AG04450 (cell line): ENCODE measurements at regions of chr7 and their contacts with region 1.

Region 1: GRCh38 chr7:23184709-23185359 is 3.0 kb downstream of the NUP42 start:
- DNase-seq: no peak
- H3K4me3 ChIP-seq: no peak overlapping the region
- H3K27ac ChIP-seq: no peak overlapping the region
- H3K27me3 ChIP-seq: no peaks in the 10 kb centered on the region
- CTCF ChIP-seq: peak; percentile 59

Region 2: GRCh38 chr7:23168111-23168885 is 16.5 kb before region 1 on chr7:
- CTCF ChIA-PET with region 1: interaction called, 14 read pairs
- POLR2A ChIA-PET with region 1: no interaction called
- DNase-seq: no peak
- H3K4me3 ChIP-seq: no peak overlapping the region
- H3K27ac ChIP-seq: no peak overlapping the region
- H3K27me3 ChIP-seq: no peaks in the 10 kb centered on the region
- CTCF ChIP-seq: no peak

Region 3: GRCh38 chr7:23196306-23196705 is 11.5 kb after region 1 on chr7:
- CTCF ChIA-PET with region 1: interaction called, 11 read pairs
- POLR2A ChIA-PET with region 1: no interaction called
- DNase-seq: no peak
- H3K4me3 ChIP-seq: no peak overlapping the region
- H3K27ac ChIP-seq: no peak overlapping the region
- H3K27me3 ChIP-seq: no peaks in the 10 kb centered on the region
- CTCF ChIP-seq: no peak

Region 4: DNA sequence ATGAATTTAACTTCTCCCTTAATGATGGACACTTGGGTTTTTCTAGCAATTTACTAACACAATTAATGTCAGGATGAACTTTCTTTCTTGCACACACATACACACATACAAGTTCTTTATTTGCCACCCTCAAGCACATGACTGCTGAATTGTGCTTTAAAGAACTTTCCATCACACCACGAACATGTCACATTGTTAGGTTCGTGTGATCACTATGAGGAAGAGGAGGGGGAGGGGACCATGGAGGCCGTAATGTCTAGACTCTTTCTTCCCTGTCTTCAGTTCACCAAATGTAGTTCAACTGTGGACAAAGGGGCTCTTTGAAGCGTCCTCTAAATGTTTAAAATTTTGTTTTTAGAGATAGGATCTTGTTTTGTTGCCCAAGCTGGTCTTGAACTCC is 28.0 kb after region 1 on chr7:
- CTCF ChIA-PET with region 1: no interaction called
- POLR2A ChIA-PET with region 1: no interaction called
- DNase-seq: no peak
- H3K4me3 ChIP-seq: no peak overlapping the region
- H3K27ac ChIP-seq: no peak overlapping the region
- H3K27me3 ChIP-seq: peaks cover 2% of the 10 kb centered on the region
- CTCF ChIP-seq: no peak

Region 5: DNA sequence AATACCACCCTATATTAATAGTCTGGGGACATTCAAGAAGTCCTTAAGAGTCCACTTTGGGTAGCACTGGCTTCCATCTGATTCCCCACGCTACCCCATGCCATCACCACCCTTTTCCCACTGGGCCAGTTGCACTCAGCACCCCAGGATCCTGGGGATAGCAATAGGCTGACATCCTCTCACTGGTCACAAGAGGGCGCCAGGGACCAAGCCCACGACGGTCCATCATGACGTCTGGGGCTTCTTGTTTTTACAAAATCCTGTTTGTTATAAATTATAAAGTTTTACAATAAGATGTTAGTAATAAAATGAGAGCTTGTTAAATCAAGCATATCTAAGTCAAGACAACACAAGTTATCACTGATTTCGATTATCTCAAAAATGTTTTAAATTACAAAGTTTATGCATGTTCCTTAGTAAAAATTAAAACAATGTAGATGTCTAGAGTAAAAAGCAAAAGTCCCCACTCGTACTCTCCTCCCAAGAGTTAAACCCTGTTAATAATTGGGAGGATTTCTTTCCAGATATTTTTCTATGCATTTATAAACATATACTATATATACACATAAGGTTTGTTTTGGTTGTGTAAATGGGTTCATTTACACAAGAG is 77.1 kb after region 1 on chr7:
- CTCF ChIA-PET with region 1: interaction called, 11 read pairs
- POLR2A ChIA-PET with region 1: no interaction called
- DNase-seq: peak; percentile 33
- H3K4me3 ChIP-seq: no peak overlapping the region
- H3K27ac ChIP-seq: no peak overlapping the region
- H3K27me3 ChIP-seq: peaks cover 15% of the 10 kb centered on the region
- CTCF ChIP-seq: peak; percentile 96